ENCODE measurements at regions of chr12 and their contacts with region 1.

Region 1: GRCh38 chr12:93677195-93678064 is at the start of gene CRADD:
- DNase-seq: peak; percentile 99
- H3K4me3 ChIP-seq: peak within 1 kb of the TSS; percentile 76
- H3K27ac ChIP-seq: peak within 1 kb of the TSS; percentile 86
- H3K4me1 ChIP-seq: peaks cover 24% of the 10 kb centered on the region
- CTCF ChIP-seq: no peak
- total RNA-seq, gene CRADD: 8.9 and 16.8 TPM in 2 replicates

Region 2: DNA sequence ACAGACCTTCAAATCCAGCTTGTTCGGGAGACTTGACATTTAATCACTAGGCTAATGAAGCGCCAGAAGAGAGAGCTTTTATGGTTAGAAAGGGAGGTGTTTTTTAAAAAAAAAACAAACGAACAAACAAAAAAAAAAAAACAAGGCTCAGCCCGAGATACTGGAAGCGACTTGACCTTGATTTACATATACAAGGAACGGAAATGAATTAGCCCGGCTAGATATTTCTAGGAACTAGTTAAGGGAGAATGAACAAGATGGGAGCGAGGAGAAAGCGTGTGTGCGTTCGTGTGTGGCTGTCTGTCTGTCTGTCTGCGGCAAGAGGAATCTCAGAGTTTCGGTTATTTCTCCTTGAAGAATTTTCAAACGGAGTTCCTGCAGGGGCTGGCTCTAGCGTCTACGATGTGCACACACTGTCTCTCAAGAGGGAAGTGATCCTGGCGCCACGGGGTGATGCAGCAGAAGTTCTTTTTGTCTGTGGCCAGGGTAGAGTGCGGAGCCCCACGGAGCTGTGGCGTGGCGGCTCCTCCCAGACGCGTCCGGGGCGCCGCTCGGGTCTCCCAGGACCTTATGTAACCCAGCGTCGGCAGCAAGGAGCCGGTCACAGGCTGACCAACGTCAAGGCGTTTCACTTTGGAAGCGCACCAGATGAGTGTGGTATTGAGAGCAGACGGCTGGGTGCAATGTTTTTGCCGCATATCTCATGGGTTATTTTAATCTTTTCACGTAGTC is 86.1 kb before region 1 on chr12:
- CTCF ChIA-PET with region 1: no interaction called
- POLR2A ChIA-PET with region 1: interaction called, 3 read pairs
- intact Hi-C with region 1: loop called (anchors 5 kb)
- DNase-seq: peak; percentile 38
- H3K4me3 ChIP-seq: peak overlapping the region; percentile 60
- H3K27ac ChIP-seq: no peak overlapping the region
- H3K4me1 ChIP-seq: peaks cover 63% of the 10 kb centered on the region
- CTCF ChIP-seq: no peak

Region 3: GRCh38 chr12:93699271-93700145 is 22.1 kb after region 1 on chr12:
- CTCF ChIA-PET with region 1: no interaction called
- POLR2A ChIA-PET with region 1: no interaction called
- intact Hi-C with region 1: no loop called
- DNase-seq: no peak
- H3K4me3 ChIP-seq: no peak overlapping the region
- H3K27ac ChIP-seq: no peak overlapping the region
- H3K4me1 ChIP-seq: no peaks in the 10 kb centered on the region
- CTCF ChIP-seq: no peak

Region 4: DNA sequence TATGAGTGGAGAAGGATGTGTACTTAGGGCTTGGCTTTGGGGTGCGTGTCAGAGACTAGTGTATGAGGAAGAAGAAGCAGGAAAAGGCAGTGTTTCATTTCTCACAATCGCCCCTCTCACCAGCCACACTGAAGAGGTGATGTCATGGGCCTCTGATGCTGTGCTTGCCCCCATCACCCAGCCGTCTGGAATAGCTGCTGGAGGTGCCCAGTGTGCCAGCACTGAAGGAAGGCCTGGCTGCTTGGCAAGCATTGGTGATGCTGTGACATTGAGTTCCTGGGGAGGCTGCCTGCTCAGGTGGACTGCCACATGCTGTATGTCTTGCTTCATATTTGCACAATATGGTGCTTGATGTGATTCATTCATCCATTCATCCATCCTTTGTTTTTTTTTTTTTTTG is 55.9 kb after region 1 on chr12:
- CTCF ChIA-PET with region 1: no interaction called
- POLR2A ChIA-PET with region 1: no interaction called
- intact Hi-C with region 1: no loop called
- DNase-seq: no peak
- H3K4me3 ChIP-seq: no peak overlapping the region
- H3K27ac ChIP-seq: no peak overlapping the region
- H3K4me1 ChIP-seq: no peaks in the 10 kb centered on the region
- CTCF ChIP-seq: no peak

Region 5: DNA sequence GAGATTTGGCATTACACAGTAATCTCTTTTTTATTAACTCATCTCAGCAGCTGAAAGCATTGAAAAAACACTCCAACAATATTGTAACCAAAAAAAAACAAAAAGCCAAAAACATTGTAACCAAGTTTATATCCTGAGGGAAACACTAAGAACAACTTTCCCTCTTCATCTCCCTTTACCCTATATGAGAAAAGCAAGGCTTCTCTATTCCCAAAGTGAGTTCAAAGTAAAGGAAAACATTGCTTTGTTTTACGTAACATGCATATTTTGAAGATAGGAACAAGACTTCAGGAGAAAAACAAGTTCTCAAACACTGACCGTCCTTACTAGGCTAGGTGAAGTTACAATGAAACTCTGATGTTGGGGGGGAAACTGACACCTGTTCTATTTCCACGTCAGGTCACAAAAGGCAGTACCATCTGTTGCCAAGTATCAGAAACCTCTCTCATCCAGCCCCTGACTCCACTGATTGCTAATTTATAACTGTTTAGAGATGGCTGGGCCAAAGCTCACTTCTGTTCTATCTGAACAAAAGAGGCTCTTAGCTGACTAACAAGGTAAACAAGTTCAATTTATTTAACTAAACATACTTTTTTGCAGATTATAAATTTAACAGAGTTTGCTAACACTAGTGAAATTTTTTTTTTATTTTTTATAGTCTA is 403.0 kb after region 1 on chr12:
- CTCF ChIA-PET with region 1: no interaction called
- POLR2A ChIA-PET with region 1: no interaction called
- intact Hi-C with region 1: no loop called
- DNase-seq: no peak
- H3K4me3 ChIP-seq: no peak overlapping the region
- H3K27ac ChIP-seq: no peak overlapping the region
- H3K4me1 ChIP-seq: no peaks in the 10 kb centered on the region
- CTCF ChIP-seq: no peak

Region 6: GRCh38 chr12:94353130-94353529 is 675.7 kb after region 1 on chr12:
- CTCF ChIA-PET with region 1: no interaction called
- POLR2A ChIA-PET with region 1: no interaction called
- intact Hi-C with region 1: no loop called
- DNase-seq: no peak
- H3K4me3 ChIP-seq: no peak overlapping the region
- H3K27ac ChIP-seq: no peak overlapping the region
- H3K4me1 ChIP-seq: no peaks in the 10 kb centered on the region
- CTCF ChIP-seq: no peak

Measured in OCI-LY7 (cell line).